ENCODE measurements at regions of chr20 and their contacts with region 1.

Region 1: DNA sequence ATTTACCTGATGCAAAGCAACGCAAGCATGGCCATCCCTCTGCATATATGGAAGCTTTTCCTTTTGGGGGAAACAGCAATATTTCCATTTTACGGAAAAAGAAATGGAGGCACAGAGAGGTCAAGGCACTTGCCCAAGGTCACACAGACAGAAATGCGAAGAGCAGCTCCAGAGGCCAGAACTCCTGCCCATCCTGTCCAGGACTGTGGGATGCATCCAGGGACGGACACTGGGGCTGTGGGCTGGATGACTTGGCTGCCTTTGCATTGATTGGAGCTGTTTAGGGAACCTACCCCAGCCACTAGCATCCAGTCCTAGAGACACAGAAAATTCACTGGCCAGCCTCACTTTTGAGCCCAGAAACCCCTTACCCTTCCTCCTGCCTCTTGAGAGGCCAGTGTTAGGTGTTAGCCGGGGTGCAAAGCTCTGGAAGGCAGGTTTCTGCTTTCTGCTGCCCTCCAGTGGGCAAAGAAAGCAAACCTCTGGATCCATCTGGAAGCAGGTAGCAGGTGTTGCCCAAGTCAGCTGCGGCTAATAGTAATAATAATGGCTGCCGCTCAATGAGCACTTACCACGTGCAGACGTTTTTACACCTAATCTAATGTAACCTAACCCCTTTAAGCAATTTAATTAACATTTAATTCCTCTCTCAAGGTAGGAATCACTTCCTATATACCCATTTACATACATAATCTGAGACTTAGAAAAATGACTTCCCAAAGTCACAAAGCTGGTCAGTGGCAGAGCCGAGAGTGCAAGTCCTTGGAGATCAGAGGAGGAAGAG is 31.7 kb upstream of the CCN5 start:
- DNase-seq: peak; percentile 87
- ATAC-seq: peak; percentile 85
- H3K4me3 ChIP-seq: no peak overlapping the region
- H3K27ac ChIP-seq: no peak overlapping the region
- H3K4me1 ChIP-seq: peaks cover 10% of the 10 kb centered on the region
- H3K27me3 ChIP-seq: no peaks in the 10 kb centered on the region
- CTCF ChIP-seq: peak; percentile 89

Region 2: GRCh38 chr20:44651684-44652423 is 31.6 kb before region 1 on chr20 and contains the start of gene ADA:
- CTCF ChIA-PET with region 1: interaction called, 3 read pairs
- POLR2A ChIA-PET with region 1: interaction called, 3 read pairs
- intact Hi-C with region 1: loop called (anchors 1 kb)
- DNase-seq: peak; percentile 65
- ATAC-seq: peak; percentile 78
- H3K4me3 ChIP-seq: peak within 1 kb of the TSS; percentile 79
- H3K27ac ChIP-seq: no peak within 1 kb of the TSS
- H3K4me1 ChIP-seq: peaks cover 7% of the 10 kb centered on the region; the same call in 1 of the 2 replicates
- H3K27me3 ChIP-seq: no peaks in the 10 kb centered on the region
- CTCF ChIP-seq: no peak
- total RNA-seq, gene ADA: 12.4 and 13.0 TPM in 2 replicates

Region 3: GRCh38 chr20:44695295-44696230 is 12.1 kb after region 1 on chr20:
- CTCF ChIA-PET with region 1: no interaction called
- POLR2A ChIA-PET with region 1: no interaction called
- intact Hi-C with region 1: no loop called
- DNase-seq: no peak
- ATAC-seq: no peak
- H3K4me3 ChIP-seq: no peak overlapping the region
- H3K27ac ChIP-seq: no peak overlapping the region
- H3K4me1 ChIP-seq: peaks cover 18% of the 10 kb centered on the region
- H3K27me3 ChIP-seq: no peaks in the 10 kb centered on the region
- CTCF ChIP-seq: no peak

Region 4: DNA sequence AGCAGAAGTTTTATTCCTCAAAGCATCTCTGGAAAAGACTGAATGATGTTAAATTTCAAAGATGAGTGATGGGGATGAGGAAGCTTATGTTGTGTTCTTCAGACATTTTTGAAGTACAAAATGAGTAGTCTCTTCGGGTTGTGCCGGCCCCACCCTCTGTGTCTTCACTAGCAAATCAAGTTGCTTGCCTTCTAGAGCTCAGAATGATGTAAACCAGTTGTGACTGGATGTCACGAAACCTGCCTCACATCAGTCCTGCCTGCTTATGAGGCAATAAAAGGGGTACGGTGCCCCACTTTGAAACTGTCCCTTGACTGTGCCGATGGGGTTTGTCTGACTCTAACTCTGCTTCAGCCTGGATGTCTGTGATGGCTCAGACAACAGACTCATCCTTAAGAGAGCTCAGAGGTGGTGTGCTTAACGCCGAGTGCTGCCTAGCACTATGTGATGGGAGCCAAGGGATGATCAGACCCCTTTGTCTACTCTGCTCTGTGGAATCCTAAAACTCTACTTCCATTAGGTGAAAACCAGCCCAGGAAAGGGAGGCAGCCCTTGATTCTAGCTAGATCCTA is 257.8 kb after region 1 on chr20:
- CTCF ChIA-PET with region 1: no interaction called
- POLR2A ChIA-PET with region 1: interaction called, 25 read pairs
- intact Hi-C with region 1: no loop called
- DNase-seq: no peak
- ATAC-seq: no peak
- H3K4me3 ChIP-seq: no peak overlapping the region
- H3K27ac ChIP-seq: no peak overlapping the region
- H3K4me1 ChIP-seq: no peaks in the 10 kb centered on the region
- H3K27me3 ChIP-seq: no peaks in the 10 kb centered on the region
- CTCF ChIP-seq: no peak